ENCODE measurements at regions of chr13 and their contacts with region 1.

Region 1: GRCh38 chr13:73223372-73223781 is 164.6 kb downstream of the KLF5 start:
- DNase-seq: peak; percentile 78
- H3K4me3 ChIP-seq: no peak overlapping the region
- H3K27ac ChIP-seq: no peak overlapping the region
- H3K4me1 ChIP-seq: peaks cover 11% of the 10 kb centered on the region
- H3K27me3 ChIP-seq: no peaks in the 10 kb centered on the region
- CTCF ChIP-seq: no peak

Region 2: DNA sequence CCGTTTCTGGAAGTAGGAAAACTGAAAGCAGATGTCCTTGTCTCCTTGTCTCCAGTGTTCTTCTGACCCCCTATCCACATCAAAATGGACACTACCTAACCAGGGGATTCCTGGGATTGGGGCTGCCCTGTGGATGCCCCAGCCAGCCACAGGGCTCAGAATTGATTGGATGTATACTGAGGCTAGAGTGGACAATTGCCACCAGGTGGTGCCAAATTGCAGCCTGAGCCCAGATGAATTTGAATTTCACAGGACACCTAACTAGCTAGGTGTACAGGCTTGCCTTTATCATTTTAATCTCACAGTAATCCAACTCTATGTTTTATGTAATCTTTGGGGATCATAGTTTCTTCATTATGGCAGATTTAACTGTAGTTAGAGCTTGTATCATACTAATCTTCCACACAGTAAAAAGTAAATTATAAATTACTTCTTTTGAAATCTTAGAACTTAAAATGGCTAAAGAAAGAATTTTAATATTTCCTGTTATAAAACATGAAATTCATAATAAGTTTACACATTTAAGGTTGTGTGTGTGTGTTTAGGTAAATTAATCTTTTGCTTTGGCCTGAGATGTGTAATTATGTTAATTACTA is 383.4 kb before region 1 on chr13:
- CTCF ChIA-PET with region 1: no interaction called
- dilution Hi-C with region 1: no loop called
- in situ Hi-C with region 1: no loop called
- intact Hi-C with region 1: loop called (anchors 2 kb)
- DNase-seq: peak; percentile 69
- H3K4me3 ChIP-seq: no peak overlapping the region
- H3K27ac ChIP-seq: peak overlapping the region; percentile 26
- H3K4me1 ChIP-seq: no peaks in the 10 kb centered on the region
- H3K27me3 ChIP-seq: no peaks in the 10 kb centered on the region
- CTCF ChIP-seq: peak; percentile 79 to 86

Region 3: GRCh38 chr13:73081256-73081915 is 142.0 kb before region 1 on chr13:
- CTCF ChIA-PET with region 1: no interaction called
- dilution Hi-C with region 1: no loop called
- in situ Hi-C with region 1: loop called in 1 of 2 experiments (anchors 10 kb)
- intact Hi-C with region 1: loop called (anchors 2 kb)
- DNase-seq: peak; percentile 45
- H3K4me3 ChIP-seq: no peak overlapping the region
- H3K27ac ChIP-seq: peak overlapping the region; percentile 11
- H3K4me1 ChIP-seq: peaks cover 8% of the 10 kb centered on the region
- H3K27me3 ChIP-seq: no peaks in the 10 kb centered on the region
- CTCF ChIP-seq: no peak

Region 4: DNA sequence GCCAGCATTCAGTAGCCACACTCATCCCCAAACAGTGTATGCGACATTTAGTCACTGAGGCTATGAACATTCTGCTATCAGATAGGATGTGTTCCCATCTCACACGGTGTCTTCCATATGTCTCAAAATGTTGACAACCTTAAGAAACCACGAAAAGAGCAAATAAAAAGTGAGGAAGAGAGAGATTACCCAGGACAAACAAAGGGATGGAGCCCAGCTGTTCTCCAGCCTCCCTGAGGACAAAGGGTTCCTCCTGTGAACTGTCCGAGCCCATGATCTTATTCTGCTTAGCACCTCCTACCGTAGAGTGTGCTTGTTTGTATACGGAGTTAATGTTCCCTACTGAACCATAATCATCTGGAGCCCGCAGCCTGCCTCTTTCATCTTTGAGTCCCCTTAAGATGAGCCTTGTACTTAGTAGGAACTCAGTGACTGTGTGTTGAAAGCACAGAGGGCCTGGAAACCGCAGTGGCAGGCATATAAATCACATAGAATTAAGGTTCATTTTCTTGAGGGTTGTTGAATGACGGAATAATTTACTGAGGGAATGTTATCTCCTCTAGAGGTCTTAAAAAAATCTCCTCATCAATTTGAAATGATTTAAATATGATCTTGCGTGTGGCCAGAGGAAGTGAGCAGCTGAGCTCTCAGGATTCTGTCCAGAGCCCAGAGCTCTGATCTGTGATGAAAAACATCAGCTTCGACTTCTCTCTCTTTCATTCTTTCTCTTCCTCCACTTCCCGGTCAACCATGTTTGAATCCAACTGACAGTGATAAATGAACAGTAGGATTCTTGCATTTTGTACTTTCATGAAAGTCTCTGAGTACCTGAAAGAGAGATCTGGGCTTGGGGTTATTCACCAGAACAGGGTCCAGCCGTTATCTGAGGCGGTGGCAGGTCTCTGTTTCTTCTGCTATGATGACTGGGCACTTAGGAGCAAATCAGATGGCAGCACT is 36.0 kb after region 1 on chr13:
- CTCF ChIA-PET with region 1: no interaction called
- dilution Hi-C with region 1: no loop called
- in situ Hi-C with region 1: no loop called
- intact Hi-C with region 1: loop called (anchors 2 kb)
- DNase-seq: no peak
- H3K4me3 ChIP-seq: no peak overlapping the region
- H3K27ac ChIP-seq: no peak overlapping the region
- H3K4me1 ChIP-seq: peaks cover 29% of the 10 kb centered on the region
- H3K27me3 ChIP-seq: no peaks in the 10 kb centered on the region
- CTCF ChIP-seq: no peak

Region 5: GRCh38 chr13:73411067-73411809 is 187.9 kb after region 1 on chr13:
- CTCF ChIA-PET with region 1: no interaction called
- dilution Hi-C with region 1: no loop called
- in situ Hi-C with region 1: loop called in 1 of 2 experiments (anchors 10 kb)
- intact Hi-C with region 1: loop called (anchors 2 kb)
- DNase-seq: peak; percentile 90
- H3K4me3 ChIP-seq: no peak overlapping the region
- H3K27ac ChIP-seq: peak overlapping the region; percentile 85
- H3K4me1 ChIP-seq: peaks cover 33% of the 10 kb centered on the region
- H3K27me3 ChIP-seq: no peaks in the 10 kb centered on the region
- CTCF ChIP-seq: no peak